ENCODE measurements at regions of chr2 and their contacts with region 1.

Region 1: GRCh38 chr2:98771721-98772524 is 41.0 kb upstream of the MGAT4A start:
- DNase-seq: peak; percentile 69
- H3K4me3 Mint-ChIP-seq: peak overlapping the region; percentile 91
- H3K27ac Mint-ChIP-seq: peak overlapping the region; percentile 97
- H3K4me1 Mint-ChIP-seq: peaks cover 63% of the 10 kb centered on the region
- H3K27me3 Mint-ChIP-seq: no peaks in the 10 kb centered on the region

Region 2: DNA sequence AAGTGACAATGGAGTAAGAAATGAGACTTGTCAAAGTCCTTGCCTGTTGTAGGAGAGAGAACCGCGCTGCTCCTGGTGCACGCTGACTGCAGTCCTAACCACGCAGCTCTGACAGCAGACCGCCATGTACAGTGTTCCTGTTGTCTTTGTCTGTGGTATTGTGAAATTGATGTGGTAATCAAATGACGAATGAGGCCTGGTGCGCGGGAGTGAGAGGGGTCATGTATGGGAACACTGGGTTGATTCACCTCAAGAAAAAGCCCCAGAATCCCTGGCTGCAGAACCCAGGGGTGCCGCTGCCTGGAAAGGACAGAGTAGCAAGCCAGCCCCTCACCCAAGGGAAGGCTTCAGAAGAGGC is 263.2 kb before region 1 on chr2:
- intact Hi-C with region 1: no loop called
- DNase-seq: peak; percentile 25
- H3K4me3 Mint-ChIP-seq: peak overlapping the region; percentile 27
- H3K27ac Mint-ChIP-seq: peak overlapping the region; percentile 65
- H3K4me1 Mint-ChIP-seq: peaks cover 67% of the 10 kb centered on the region
- H3K27me3 Mint-ChIP-seq: no peaks in the 10 kb centered on the region

Region 3: GRCh38 chr2:98654699-98655495 is 117.0 kb before region 1 on chr2:
- intact Hi-C with region 1: loop called (anchors 2 kb)
- DNase-seq: no peak
- H3K4me3 Mint-ChIP-seq: peak overlapping the region; percentile 28
- H3K27ac Mint-ChIP-seq: peak overlapping the region; percentile 73
- H3K4me1 Mint-ChIP-seq: peaks cover 77% of the 10 kb centered on the region
- H3K27me3 Mint-ChIP-seq: no peaks in the 10 kb centered on the region

Region 4: DNA sequence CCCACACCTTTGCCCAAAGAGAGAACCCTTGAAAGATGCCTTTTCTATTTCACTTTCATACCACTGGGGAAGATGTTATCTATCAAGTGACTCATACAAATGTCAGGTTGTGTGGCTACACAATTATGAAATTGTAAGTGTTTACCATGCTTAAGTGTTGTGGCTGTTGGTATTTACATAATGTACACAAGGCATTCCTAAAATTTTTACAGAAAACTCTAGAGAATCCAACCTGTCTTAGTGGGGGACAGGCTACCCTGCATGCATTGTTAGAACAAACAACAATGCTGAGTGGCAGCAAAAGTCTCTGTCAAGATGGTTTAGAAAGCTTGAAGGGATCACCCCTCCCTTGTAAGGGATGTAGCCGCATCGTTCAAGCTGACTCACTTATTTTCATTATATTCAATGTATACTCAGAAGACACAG is 35.4 kb before region 1 on chr2:
- intact Hi-C with region 1: loop called (anchors 1 kb)
- DNase-seq: peak; percentile 46
- H3K4me3 Mint-ChIP-seq: peak overlapping the region; percentile 20
- H3K27ac Mint-ChIP-seq: peak overlapping the region; percentile 62
- H3K4me1 Mint-ChIP-seq: peaks cover 60% of the 10 kb centered on the region
- H3K27me3 Mint-ChIP-seq: no peaks in the 10 kb centered on the region

Region 5: GRCh38 chr2:98822301-98823164 is 50.6 kb after region 1 on chr2:
- intact Hi-C with region 1: loop called (anchors 5 kb)
- DNase-seq: peak; percentile 61
- H3K4me3 Mint-ChIP-seq: peak overlapping the region; percentile 39
- H3K27ac Mint-ChIP-seq: no peak overlapping the region
- H3K4me1 Mint-ChIP-seq: peaks cover 16% of the 10 kb centered on the region
- H3K27me3 Mint-ChIP-seq: peaks cover 21% of the 10 kb centered on the region